ENCODE measurements at regions of chr3 and their contacts with region 1.

Region 1: DNA sequence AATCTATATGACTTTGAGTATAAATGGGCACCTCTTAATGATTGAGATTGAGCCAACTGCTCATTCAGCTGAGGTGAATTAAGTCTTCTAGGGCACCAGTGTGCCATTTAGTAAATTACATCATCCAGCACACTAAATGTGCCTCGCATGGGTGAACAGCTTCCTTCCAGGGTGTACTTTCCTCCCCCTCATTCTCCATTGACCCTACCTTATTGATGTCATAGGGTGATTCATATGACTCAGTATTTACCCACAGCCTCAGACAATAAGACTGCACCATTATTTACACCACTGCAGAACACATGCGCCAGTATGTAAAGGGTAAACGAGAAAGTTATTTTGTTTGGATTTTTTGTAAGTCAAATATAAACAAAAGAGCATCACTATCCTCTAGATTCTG is 185.2 kb upstream of the ARL6 start:
- DNase-seq: no peak
- H3K4me3 ChIP-seq: no peak overlapping the region
- H3K27ac ChIP-seq: no peak overlapping the region
- H3K4me1 ChIP-seq: no peaks in the 10 kb centered on the region
- CTCF ChIP-seq: no peak

Region 2: GRCh38 chr3:97613139-97613538 is 33.8 kb after region 1 on chr3:
- CTCF ChIA-PET with region 1: no interaction called
- POLR2A ChIA-PET with region 1: interaction called, 3 read pairs
- intact Hi-C with region 1: loop called (anchors 1 kb)
- DNase-seq: no peak
- H3K4me3 ChIP-seq: no peak overlapping the region
- H3K27ac ChIP-seq: no peak overlapping the region
- H3K4me1 ChIP-seq: no peaks in the 10 kb centered on the region
- CTCF ChIP-seq: no peak

Measured in OCI-LY7 (cell line).